MCF 10A (cell line): ENCODE measurements at regions of chr3 and their contacts with region 1.

Region 1: DNA sequence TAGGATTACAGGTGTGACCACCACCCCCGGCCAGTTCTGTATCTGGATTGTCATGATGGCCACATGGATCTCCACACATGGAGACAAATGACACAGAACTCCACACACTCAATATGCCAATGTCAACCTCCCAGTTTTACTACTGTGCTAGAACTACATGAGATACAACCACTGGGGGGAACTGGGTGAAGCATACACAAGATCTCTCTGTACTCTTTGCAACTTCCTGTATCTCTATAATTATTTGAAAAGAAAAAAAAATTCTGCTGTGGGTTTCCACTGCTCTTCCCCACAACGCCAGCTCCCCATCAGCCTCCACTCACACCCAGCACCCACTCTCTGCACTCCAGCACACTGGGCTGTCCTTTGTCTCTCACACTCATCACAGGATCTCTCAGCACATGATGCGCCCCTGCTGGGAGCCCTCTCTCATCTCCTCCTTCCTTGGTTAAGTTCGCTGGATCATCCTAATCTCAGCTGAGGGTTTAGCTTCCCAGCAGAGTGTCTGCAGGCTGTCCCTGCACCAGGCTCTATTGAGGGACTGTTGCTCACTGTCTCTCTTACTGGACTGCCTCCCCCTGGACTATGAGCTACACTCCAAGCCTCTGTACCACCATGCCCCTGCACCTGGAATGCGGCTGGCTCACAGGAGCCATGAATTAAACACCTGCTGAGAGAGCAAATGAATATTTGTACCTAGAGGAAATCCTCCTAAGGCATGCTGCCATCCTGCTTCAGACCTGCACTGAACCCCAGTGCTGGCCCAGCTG is 10.7 kb upstream of the RAB43 start:
- DNase-seq: no peak
- H3K4me3 Mint-ChIP-seq: no peak overlapping the region
- H3K27ac Mint-ChIP-seq: no peak overlapping the region
- H3K4me1 Mint-ChIP-seq: peaks cover 5% of the 10 kb centered on the region
- H3K27me3 Mint-ChIP-seq: no peaks in the 10 kb centered on the region
- CTCF ChIP-seq: no peak

Region 2: DNA sequence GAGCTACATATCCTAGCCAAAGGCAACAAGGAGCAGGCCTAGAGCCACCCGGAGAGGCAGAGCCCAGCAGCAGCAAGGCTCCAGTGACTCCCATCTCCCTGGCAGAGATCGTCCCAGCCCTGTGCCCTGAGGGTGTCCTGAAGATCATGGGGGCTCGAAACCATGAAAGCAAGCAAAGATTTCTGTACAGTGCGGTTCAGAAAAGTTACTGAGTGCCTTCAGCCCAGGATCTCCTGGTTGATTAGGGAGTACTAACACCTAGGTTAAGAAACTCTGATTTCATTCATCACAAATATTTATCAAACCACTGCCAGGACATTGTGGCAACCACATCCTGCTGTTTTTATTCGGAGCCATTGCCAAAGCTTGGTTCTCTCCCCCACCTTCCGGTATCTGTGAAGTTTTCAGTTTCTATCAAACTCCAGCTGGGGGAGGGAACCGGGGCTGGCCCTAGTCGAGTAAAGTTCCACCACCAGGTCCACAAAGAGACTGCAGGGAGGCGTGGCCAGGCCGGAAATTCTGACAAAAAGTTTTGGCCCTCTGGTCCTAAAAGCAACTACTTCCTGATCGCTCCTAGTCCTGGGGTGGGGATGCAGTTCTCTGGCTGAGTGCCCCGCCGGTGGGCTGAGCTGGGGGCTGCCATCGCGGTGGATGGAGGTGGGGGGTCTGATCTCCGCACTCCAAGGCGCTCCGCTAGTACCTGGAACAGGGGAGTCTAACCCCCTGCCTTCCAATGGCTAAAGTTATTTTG is 11.9 kb before region 1 on chr3:
- CTCF ChIA-PET with region 1: interaction called, 10 read pairs
- POLR2A ChIA-PET with region 1: interaction called, 5 read pairs
- intact Hi-C with region 1: no loop called
- DNase-seq: peak; percentile 98
- H3K4me3 Mint-ChIP-seq: peak overlapping the region; percentile 77
- H3K27ac Mint-ChIP-seq: peak overlapping the region; percentile 82
- H3K4me1 Mint-ChIP-seq: peaks cover 26% of the 10 kb centered on the region
- H3K27me3 Mint-ChIP-seq: no peaks in the 10 kb centered on the region
- CTCF ChIP-seq: no peak

Region 3: GRCh38 chr3:129413687-129414506 is 281.6 kb after region 1 on chr3:
- CTCF ChIA-PET with region 1: no interaction called
- POLR2A ChIA-PET with region 1: no interaction called
- intact Hi-C with region 1: no loop called
- DNase-seq: peak; percentile 37
- H3K4me3 Mint-ChIP-seq: no peak overlapping the region
- H3K27ac Mint-ChIP-seq: no peak overlapping the region
- H3K4me1 Mint-ChIP-seq: peaks cover 10% of the 10 kb centered on the region
- H3K27me3 Mint-ChIP-seq: no peaks in the 10 kb centered on the region
- CTCF ChIP-seq: no peak